Heart left ventricle (tissue), 16 donors: ENCODE measurements at regions of chr20 and their contacts with region 1.

Region 1: DNA sequence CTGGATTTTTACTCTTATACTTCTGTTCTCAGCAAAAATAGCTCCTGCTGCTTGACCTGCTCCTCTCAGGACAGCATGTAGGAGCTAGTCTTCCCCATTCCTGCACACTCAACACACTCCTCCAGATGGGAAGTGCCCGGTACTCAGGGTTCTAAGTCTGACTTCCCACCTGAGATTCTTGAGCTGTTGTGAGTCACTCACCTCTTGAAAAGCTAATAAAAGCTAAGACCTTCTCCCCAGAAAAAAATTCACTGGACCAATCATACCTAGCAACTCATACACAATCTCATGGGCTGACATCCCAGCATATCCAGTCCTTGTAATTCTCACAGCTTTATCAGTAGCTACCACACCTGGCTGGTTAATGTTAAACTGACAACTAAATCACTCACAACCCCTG is 53.5 kb downstream of the TRPC4AP start:
- DNase-seq: no peak
- ATAC-seq: peak in 2 of 4 donors; percentile 33 to 44
- H3K4me3 ChIP-seq: no peak overlapping the region
- H3K27ac ChIP-seq: no peak overlapping the region
- H3K4me1 ChIP-seq: peaks cover 0 to 14% (median 0%) of the 10 kb centered on the region in 12 donors
- H3K27me3 ChIP-seq: no peaks in the 10 kb centered on the region
- CTCF ChIP-seq: no peak
- POLR2A ChIP-seq: no peak

Region 2: DNA sequence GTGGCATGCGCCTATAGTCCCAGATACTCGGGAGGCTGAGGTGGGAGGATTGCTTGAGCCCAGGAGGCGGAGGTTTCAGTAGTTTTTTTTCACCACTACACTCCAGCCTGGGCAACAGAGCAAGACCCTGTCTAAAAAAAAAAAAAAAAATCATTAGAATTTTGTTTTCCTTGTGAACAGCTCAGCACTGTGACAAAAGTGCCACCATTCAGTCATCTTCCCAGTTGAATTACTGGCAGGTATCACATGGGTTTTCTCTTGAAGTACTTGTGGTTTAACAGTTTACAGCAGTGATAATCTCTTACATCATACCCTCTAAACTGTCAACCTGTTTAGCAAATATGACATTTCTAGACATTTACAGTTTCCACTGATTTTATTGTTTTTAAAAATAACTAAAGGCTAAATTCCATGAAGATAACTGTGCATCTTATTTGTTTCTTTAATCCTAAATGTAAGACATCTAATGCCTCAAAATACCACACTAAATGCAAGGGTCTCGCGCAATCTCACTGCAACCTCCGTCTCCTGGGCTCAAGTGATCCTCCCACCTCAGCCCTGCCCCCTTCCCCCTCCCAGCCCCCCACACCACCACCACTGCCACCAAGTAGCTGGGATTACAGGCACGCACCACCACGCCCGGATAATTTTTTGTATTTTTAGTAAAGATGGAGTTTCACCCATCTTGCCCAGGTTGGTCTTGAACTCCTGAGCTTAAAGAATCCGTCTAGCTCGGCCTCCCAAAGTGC is 46.5 kb after region 1 on chr20:
- intact Hi-C with region 1: loop called in 1 of 10 experiments (anchors 10 kb)
- DNase-seq: no peak
- ATAC-seq: no peak
- H3K4me3 ChIP-seq: no peak overlapping the region
- H3K27ac ChIP-seq: no peak overlapping the region
- H3K4me1 ChIP-seq: peaks cover 0 to 66% (median 36%) of the 10 kb centered on the region in 12 donors
- H3K27me3 ChIP-seq: no peaks in the 10 kb centered on the region
- CTCF ChIP-seq: no peak
- POLR2A ChIP-seq: no peak

Region 3: GRCh38 chr20:35215066-35215956 is 176.2 kb after region 1 on chr20:
- intact Hi-C with region 1: loop called in 1 of 10 experiments (anchors 10 kb)
- DNase-seq: no peak
- ATAC-seq: no peak
- H3K4me3 ChIP-seq: no peak overlapping the region
- H3K27ac ChIP-seq: no peak overlapping the region
- H3K4me1 ChIP-seq: no peaks in the 10 kb centered on the region
- H3K27me3 ChIP-seq: no peaks in the 10 kb centered on the region
- CTCF ChIP-seq: no peak
- POLR2A ChIP-seq: no peak

Region 4: DNA sequence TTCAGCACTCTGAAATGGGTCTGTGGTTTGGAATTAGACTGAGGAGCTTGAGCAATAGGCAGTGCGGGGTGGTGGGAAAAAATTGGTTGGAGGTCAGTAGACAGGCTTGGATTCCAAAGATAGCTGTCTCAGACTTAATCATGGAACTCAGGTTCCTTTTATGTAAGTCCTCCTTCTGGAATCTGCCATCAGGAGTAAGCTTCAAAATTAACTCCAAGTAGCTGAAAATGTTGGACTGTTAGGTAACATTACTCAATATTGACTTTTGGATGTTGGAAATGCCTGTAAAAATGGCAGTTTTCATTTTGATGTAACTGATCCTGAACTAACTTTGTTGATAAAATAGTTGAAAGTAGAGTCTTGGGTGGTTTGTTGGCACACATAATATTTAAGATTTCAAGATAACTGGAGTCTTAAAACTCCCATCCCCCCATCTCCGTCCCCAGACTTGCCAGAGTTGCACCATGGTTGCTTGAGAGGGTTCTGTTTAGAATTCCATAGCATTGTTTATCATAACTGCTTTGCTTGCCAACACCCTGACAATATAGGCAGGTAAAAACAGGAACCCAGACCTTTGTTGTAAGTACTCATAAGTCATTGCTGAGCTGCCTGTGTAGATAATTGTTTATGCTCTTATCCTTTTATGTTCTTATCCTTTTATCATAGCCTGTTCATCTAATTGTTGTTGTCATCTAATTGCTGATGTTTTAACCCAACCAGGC is 815.7 kb after region 1 on chr20:
- intact Hi-C with region 1: no loop called
- DNase-seq: no peak
- ATAC-seq: no peak
- H3K4me3 ChIP-seq: no peak overlapping the region
- H3K27ac ChIP-seq: no peak overlapping the region
- H3K4me1 ChIP-seq: peaks cover 0 to 8% (median 0%) of the 10 kb centered on the region in 12 donors
- H3K27me3 ChIP-seq: no peaks in the 10 kb centered on the region
- CTCF ChIP-seq: no peak
- POLR2A ChIP-seq: no peak